ENCODE measurements at regions of chr16 and their contacts with region 1.

Region 1: DNA sequence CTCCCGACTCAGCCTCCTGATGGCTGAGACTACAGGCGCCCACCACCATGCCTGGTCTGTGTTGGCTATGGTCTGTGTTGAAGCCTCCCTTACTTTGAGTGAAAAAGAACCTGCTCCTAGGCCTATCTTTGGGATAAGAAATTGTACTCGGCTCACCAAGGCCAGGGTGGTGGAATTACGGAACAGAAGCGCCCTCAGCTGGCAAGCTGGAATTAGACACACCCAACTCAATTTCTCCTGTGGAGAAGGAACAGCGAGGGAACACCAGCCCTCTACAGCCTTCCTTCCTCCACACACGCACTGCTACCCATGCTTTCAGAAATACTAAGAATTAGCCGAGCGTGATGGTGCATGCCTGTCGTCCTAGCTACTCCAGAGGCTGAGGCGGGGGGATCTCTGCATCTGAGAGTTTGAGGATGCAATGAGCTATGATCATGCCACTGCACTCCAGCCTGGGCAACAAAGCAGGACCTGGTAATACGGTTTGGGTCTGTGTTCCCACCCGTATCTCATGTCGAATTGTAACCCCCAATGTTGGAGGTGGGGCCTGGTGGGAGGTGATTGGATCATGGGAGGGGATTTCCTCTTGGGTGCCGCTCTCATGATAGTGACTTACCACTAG is 40.1 kb upstream of the RBBP6 start:
- DNase-seq: peak; percentile 60
- H3K4me3 Mint-ChIP-seq: no peak overlapping the region
- H3K27ac Mint-ChIP-seq: no peak overlapping the region
- H3K4me1 Mint-ChIP-seq: no peaks in the 10 kb centered on the region
- H3K27me3 Mint-ChIP-seq: peaks cover 99% of the 10 kb centered on the region
- CTCF ChIP-seq: no peak

Region 2: DNA sequence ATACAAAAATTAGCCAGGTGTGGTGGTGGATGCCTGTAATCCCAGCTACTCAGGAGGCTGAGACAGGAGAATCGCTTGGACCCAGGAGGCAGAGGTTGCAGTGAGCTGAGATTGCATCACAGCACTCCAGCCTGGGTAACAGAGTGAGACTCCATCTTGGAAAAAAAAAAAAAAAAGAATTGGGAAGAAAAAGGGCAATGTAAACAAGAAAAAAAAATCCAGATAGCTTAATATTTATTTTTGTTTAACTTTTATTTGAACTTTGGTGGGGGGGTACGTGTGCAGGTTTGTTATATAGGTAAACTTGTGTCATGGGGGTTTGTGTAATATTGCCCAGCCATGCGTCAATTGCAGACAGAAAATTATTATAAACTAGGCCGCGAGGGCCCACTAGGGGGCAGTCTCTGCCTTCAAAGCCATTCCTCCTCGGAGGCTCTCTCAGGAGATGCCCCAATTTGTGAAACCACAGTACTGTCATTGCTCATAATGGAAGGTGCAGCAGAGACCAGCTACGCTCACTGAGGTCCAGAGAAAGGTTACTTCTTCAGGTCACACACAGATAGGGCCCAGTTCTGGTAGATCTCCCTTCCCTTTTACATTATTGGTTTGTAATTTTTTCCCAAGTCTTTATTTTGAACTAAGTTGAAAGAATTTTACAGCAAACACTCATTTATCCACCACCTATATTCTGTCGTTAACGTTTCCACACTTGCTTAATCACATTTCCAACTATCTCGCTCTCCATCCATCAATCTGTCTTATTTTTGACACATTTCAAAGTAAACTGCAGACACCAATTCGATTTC is 457.3 kb before region 1 on chr16:
- CTCF ChIA-PET with region 1: interaction called, 22 read pairs
- intact Hi-C with region 1: loop called (anchors 1 kb)
- DNase-seq: peak; percentile 83
- H3K4me3 Mint-ChIP-seq: no peak overlapping the region
- H3K27ac Mint-ChIP-seq: no peak overlapping the region
- H3K4me1 Mint-ChIP-seq: no peaks in the 10 kb centered on the region
- H3K27me3 Mint-ChIP-seq: peaks cover 60% of the 10 kb centered on the region
- CTCF ChIP-seq: peak; percentile 79

Region 3: GRCh38 chr16:24070851-24071250 is 428.5 kb before region 1 on chr16:
- CTCF ChIA-PET with region 1: interaction called, 27 read pairs
- intact Hi-C with region 1: loop called (anchors 2 kb)
- DNase-seq: peak; percentile 44
- H3K4me3 Mint-ChIP-seq: no peak overlapping the region
- H3K27ac Mint-ChIP-seq: no peak overlapping the region
- H3K4me1 Mint-ChIP-seq: no peaks in the 10 kb centered on the region
- H3K27me3 Mint-ChIP-seq: peaks cover 65% of the 10 kb centered on the region
- CTCF ChIP-seq: peak; percentile 47

Region 4: GRCh38 chr16:24291932-24292331 is 207.4 kb before region 1 on chr16:
- CTCF ChIA-PET with region 1: no interaction called
- intact Hi-C with region 1: no loop called
- DNase-seq: no peak
- H3K4me3 Mint-ChIP-seq: no peak overlapping the region
- H3K27ac Mint-ChIP-seq: no peak overlapping the region
- H3K4me1 Mint-ChIP-seq: peaks cover 3% of the 10 kb centered on the region
- H3K27me3 Mint-ChIP-seq: peaks cover 67% of the 10 kb centered on the region
- CTCF ChIP-seq: no peak

Region 5: GRCh38 chr16:24409049-24409448 is 90.3 kb before region 1 on chr16:
- CTCF ChIA-PET with region 1: no interaction called
- intact Hi-C with region 1: loop called (anchors 1 kb)
- DNase-seq: peak; percentile 12
- H3K4me3 Mint-ChIP-seq: no peak overlapping the region
- H3K27ac Mint-ChIP-seq: no peak overlapping the region
- H3K4me1 Mint-ChIP-seq: no peaks in the 10 kb centered on the region
- H3K27me3 Mint-ChIP-seq: peaks cover 63% of the 10 kb centered on the region
- CTCF ChIP-seq: no peak

Region 6: GRCh38 chr16:24430945-24431760 is 68.2 kb before region 1 on chr16:
- CTCF ChIA-PET with region 1: no interaction called
- intact Hi-C with region 1: no loop called
- DNase-seq: no peak
- H3K4me3 Mint-ChIP-seq: no peak overlapping the region
- H3K27ac Mint-ChIP-seq: no peak overlapping the region
- H3K4me1 Mint-ChIP-seq: no peaks in the 10 kb centered on the region
- H3K27me3 Mint-ChIP-seq: peaks cover 72% of the 10 kb centered on the region
- CTCF ChIP-seq: no peak